ENCODE measurements at regions of chr20 and their contacts with region 1.

Region 1: DNA sequence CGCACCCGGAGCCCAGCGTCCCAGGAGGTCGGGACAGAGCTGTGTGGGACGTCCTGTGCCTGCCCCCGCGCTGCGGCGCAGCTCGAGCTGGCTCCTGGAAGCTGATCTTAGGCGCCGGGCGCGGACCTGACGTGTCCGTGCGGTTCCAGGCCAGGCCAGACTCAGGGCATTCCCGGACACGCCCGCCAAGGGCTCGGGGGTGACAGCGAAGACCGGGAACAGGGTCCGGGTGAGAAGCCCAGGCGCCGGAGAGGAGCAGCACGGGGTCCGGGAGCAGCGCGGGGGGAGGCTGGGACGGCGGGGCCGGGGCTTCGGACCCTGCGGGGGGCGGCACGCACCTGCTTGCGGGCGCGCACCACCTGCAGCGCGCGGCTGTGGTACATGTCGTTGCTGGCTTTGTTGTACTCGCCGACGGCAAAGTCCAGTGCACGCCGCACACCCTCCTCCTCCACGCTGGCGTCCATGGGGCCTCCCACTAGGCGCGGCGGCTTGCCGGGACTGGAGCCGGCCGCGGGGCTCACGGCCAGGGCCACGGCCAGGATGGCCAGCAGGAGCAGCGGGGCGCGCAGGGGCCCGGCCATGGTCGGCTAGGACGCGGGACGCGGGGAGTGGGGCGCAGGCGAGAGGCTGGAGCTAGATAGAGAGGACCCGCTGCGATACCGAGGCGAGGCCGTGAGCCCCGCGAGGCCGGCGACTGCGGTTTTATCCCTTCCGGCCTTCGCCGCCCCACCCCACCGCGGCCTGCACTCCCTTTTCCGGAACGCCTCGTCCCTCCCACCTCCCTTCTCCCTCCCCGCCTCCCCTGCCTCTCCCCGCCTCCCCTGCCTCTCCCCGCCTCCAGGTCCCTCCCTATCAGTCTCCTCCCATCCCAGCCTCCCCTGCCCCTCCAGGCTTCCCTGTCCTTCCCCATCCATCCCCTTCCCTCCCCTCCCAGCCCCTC is at the start of gene CST3:
- DNase-seq: peak; percentile 9
- H3K4me3 ChIP-seq: peak within 1 kb of the TSS; percentile 80
- CTCF ChIP-seq: no peak

Region 2: GRCh38 chr20:23484081-23484480 is 153.5 kb before region 1 on chr20:
- CTCF ChIA-PET with region 1: no interaction called
- POLR2A ChIA-PET with region 1: no interaction called
- DNase-seq: no peak
- H3K4me3 ChIP-seq: no peak overlapping the region
- CTCF ChIP-seq: no peak

Region 3: DNA sequence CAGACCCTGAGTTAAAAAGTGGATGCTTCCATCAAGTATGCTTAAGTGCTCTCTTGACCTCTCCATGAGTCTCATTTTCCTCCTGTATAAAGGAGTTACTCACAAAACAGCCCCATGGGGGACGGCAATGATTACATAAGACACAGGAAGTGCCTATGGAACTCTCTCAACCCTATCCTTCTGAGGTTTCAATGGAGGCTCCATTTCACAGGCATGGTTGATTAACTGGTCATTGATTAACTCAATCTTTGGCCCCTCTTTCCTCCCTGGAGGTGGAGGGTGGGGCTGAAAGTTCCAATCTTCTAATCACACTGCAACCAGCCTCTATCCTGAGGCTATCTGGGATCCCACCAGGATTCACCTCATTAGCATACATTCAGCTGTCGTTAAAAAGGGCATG is 117.4 kb before region 1 on chr20:
- CTCF ChIA-PET with region 1: no interaction called
- POLR2A ChIA-PET with region 1: no interaction called
- DNase-seq: no peak
- H3K4me3 ChIP-seq: no peak overlapping the region
- CTCF ChIP-seq: no peak

Region 4: GRCh38 chr20:23622839-23623343 is 14.7 kb before region 1 on chr20:
- CTCF ChIA-PET with region 1: interaction called, 3 read pairs
- POLR2A ChIA-PET with region 1: interaction called, 11 read pairs
- DNase-seq: peak; percentile 42
- H3K4me3 ChIP-seq: peak overlapping the region; percentile 33
- CTCF ChIP-seq: no peak

Region 5: DNA sequence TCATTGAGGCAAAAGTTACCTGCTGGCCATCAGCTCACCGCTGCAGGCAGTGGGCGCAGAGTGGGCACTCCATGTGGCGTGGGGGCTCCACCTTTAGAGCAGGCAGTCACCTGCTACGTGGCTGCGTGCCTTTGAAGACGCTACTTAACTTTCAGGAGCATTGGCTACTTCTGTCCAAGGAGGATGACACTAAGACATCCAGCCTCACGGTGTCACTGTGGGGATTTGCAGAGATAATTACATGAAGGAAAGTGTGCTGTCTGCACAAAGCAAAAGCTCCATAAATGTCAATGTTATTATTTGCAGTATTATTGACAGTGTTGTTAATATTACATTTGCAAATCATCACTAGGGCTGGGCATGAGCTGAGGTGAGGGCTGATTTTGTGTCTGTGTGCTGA is 665.8 kb after region 1 on chr20:
- CTCF ChIA-PET with region 1: no interaction called
- POLR2A ChIA-PET with region 1: no interaction called
- DNase-seq: no peak
- H3K4me3 ChIP-seq: no peak overlapping the region
- CTCF ChIP-seq: no peak